ENCODE measurements at regions of chr3 and their contacts with region 1.

Region 1: GRCh38 chr3:184135149-184135910 is at the start of gene EIF2B5:
- DNase-seq: peak; percentile 90 to 96 (median 92)
- ATAC-seq: peak; percentile 90
- H3K4me3 ChIP-seq: peak within 1 kb of the TSS; percentile 97
- H3K27ac ChIP-seq: peak within 1 kb of the TSS; percentile 92
- H3K4me1 ChIP-seq: peaks cover 7 to 13% of the 10 kb centered on the region in 2 experiments; a peak in 4 of 5 replicates
- H3K27me3 ChIP-seq: no peaks in the 10 kb centered on the region; a peak in 1 of 5 replicates
- CTCF ChIP-seq: peak; percentile 29 to 49 (median 31); a peak in 5 of 6 replicates
- EP300 ChIP-seq: peak; percentile 51
- POLR2A ChIP-seq: peak; percentile 92
- RAD21 ChIP-seq: peak; percentile 20 to 28; a peak in 3 of 4 replicates
- polyA plus RNA-seq, gene EIF2B5: 19.1 to 31.8 TPM

Region 2: DNA sequence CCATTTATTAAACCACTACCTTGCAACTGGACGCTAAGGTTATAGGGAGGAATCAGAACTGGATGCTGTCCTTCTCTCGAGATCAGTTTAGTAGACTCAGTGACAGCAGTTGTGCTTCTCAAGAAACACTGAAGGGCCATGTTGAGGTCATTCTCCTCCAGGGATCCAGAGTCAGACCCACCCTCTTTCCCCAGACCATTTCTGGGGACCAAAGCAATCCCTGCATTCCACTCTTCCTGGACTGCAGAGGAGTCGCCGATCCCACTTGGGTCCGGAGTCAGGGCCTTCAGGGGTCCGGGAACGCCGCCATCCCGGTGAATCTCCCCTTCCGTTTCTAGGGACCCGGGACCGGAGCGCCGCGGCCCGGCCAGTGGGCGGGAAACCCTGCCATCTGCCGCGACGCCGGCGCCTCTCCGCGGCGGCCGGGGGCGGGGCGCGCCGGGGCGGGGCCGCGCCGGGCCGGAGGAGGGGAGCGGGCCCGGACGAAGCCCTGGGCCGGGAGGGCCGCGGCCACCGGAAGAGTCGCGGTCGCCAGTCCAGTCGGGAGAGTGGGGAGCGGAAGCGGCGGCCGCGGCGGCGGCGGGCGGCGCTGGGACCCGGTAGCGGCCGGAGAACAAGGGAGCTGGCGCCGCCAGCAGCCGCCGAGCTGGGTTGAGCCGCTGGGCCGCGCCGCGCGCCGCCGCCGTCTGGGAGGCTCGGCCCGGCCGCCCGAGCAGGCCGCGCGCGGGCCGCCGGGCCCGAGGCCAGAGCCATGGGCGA is 19.7 kb after region 1 on chr3 and contains the start of gene DVL3:
- CTCF ChIA-PET with region 1: no interaction called
- POLR2A ChIA-PET with region 1: interaction called, 6 read pairs
- in situ Hi-C with region 1: no loop called
- intact Hi-C with region 1: loop called (anchors 2 kb)
- DNase-seq: peak; percentile 75 to 93 (median 91)
- ATAC-seq: peak; percentile 82
- H3K4me3 ChIP-seq: peak within 1 kb of the TSS; percentile 71
- H3K27ac ChIP-seq: peak within 1 kb of the TSS; percentile 88
- H3K4me1 ChIP-seq: peaks cover 22 to 23% of the 10 kb centered on the region in 2 experiments; a peak in 4 of 5 replicates
- H3K27me3 ChIP-seq: no peaks in the 10 kb centered on the region
- CTCF ChIP-seq: no peak
- EP300 ChIP-seq: no peak
- POLR2A ChIP-seq: peak; percentile 51; the same call in 1 of the 2 replicates
- RAD21 ChIP-seq: no peak
- polyA plus RNA-seq, gene DVL3: 3.1 to 5.4 TPM